PC-9 (cell line): ENCODE measurements at regions of chr7 and their contacts with region 1.

Region 1: DNA sequence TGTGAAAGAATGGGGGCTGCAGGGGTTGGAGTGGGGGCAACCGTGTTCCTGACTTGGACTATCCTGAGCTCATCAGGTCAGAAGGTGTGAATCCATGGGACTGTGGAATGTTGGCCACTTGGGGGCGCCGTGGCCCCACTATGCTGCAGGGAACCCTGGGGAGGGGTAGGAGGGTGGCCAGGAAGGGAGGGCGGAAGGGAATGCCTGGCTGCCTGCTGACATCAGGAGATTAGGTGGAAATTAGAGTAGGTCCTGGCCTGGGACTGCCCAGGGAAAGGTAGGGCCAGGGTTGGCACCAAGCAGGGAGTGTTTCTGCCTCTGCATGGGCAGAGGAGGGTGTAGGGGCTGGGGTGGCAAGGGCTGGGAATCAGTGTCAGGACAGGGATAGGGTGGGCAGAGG is 65.8 kb upstream of the PRSS58 start:
- DNase-seq: peak; percentile 66 to 85
- H3K4me3 ChIP-seq: no peak overlapping the region
- H3K27ac ChIP-seq: no peak overlapping the region
- H3K4me1 ChIP-seq: peaks cover 13% of the 10 kb centered on the region
- H3K27me3 ChIP-seq: no peaks in the 10 kb centered on the region
- CTCF ChIP-seq: peak; percentile 88

Region 2: DNA sequence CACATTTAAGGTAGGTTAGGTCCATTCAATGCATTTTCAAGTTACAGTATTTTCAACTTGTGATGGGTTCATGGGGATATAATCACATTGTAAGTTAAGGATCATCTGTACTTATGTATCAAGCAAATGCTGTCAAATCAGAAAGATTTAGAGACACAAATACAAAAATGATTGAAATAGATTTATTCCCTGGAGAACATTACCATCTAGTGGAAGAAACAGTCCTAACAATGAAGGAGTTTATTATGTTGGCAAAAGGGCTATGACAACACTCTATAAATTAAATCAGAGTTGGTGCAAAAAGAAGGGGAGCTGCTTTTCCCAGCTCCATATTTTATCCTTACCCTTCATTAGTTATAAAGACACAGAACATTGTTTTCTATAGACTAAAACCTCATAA is 134.9 kb before region 1 on chr7:
- CTCF ChIA-PET with region 1: interaction called, 11 read pairs
- POLR2A ChIA-PET with region 1: no interaction called
- intact Hi-C with region 1: no loop called
- DNase-seq: peak in 1 of 2 experiments; percentile 55
- H3K4me3 ChIP-seq: no peak overlapping the region
- H3K27ac ChIP-seq: no peak overlapping the region
- H3K4me1 ChIP-seq: 0 out of 2 replicates have a peak, but pooled peaks cover 8% of the 10 kb centered on the region
- H3K27me3 ChIP-seq: no peaks in the 10 kb centered on the region
- CTCF ChIP-seq: peak; percentile 74

Region 3: GRCh38 chr7:142391191-142391992 is 67.7 kb after region 1 on chr7:
- CTCF ChIA-PET with region 1: no interaction called
- POLR2A ChIA-PET with region 1: no interaction called
- intact Hi-C with region 1: no loop called
- DNase-seq: peak in 1 of 2 experiments; percentile 52
- H3K4me3 ChIP-seq: no peak overlapping the region
- H3K27ac ChIP-seq: no peak overlapping the region
- H3K4me1 ChIP-seq: 0 out of 2 replicates have a peak, but pooled peaks cover 4% of the 10 kb centered on the region
- H3K27me3 ChIP-seq: no peaks in the 10 kb centered on the region
- CTCF ChIP-seq: peak; percentile 58

Region 4: GRCh38 chr7:142485617-142486226 is 162.0 kb after region 1 on chr7:
- CTCF ChIA-PET with region 1: interaction called, 12 read pairs
- POLR2A ChIA-PET with region 1: no interaction called
- intact Hi-C with region 1: no loop called
- DNase-seq: no peak
- H3K4me3 ChIP-seq: no peak overlapping the region
- H3K27ac ChIP-seq: no peak overlapping the region
- H3K4me1 ChIP-seq: no peaks in the 10 kb centered on the region; the same call in 1 of the 2 replicates
- H3K27me3 ChIP-seq: no peaks in the 10 kb centered on the region
- CTCF ChIP-seq: 0 out of 2 replicates have a peak, but pooled peaks have one; percentile 32

Region 5: DNA sequence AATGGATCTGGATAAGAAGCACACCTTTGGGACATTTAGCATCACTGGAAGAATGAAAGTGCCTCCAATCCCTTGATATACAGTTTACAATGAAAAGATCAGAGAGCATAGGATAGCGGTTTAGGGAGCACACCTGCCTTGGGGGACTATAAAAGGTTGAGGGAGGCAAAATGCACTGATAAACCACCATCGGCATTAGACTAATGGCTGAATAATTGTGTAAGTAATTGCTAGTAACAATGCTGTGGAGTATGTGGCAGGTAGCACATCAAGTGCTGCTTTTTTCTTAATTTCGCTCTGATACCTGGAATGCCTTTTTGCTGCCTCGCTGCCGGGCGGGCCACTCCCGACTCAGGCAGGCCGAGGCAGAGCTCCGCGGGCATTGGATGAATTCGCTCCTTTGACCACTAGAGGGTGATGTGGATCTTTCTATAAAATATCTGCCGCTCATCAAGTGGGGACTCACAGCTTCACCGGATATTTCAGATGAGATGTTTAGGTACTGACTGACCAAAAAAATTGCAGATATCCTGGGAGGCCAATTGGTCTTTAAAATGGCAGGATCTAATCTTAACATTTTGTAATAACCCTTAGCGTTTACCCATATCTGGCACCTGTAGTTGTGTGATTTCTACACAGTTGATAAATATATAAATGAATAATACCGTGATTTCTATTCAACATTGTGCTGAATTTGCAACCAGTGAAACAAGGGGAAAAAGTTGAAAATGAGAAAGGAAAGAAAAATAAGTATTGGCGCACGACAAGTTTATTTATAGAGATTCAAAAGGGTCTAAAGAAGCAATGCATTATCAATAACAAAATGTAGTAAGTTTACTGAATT is 308.8 kb after region 1 on chr7:
- CTCF ChIA-PET with region 1: no interaction called
- POLR2A ChIA-PET with region 1: no interaction called
- intact Hi-C with region 1: loop called (anchors 1 kb)
- DNase-seq: peak; percentile 70 to 72
- H3K4me3 ChIP-seq: no peak overlapping the region
- H3K27ac ChIP-seq: no peak overlapping the region
- H3K4me1 ChIP-seq: no peaks in the 10 kb centered on the region
- H3K27me3 ChIP-seq: no peaks in the 10 kb centered on the region
- CTCF ChIP-seq: peak; percentile 93

Region 6: GRCh38 chr7:142960955-142961512 is 637.3 kb after region 1 on chr7:
- CTCF ChIA-PET with region 1: no interaction called
- POLR2A ChIA-PET with region 1: no interaction called
- intact Hi-C with region 1: loop called (anchors 5 kb)
- DNase-seq: no peak
- H3K4me3 ChIP-seq: no peak overlapping the region
- H3K27ac ChIP-seq: no peak overlapping the region
- H3K4me1 ChIP-seq: peaks cover 26% of the 10 kb centered on the region
- H3K27me3 ChIP-seq: no peaks in the 10 kb centered on the region
- CTCF ChIP-seq: peak; percentile 60

Region 7: GRCh38 chr7:143063741-143064140 is 740.0 kb after region 1 on chr7:
- CTCF ChIA-PET with region 1: no interaction called
- POLR2A ChIA-PET with region 1: no interaction called
- intact Hi-C with region 1: no loop called
- DNase-seq: no peak
- H3K4me3 ChIP-seq: no peak overlapping the region
- H3K27ac ChIP-seq: no peak overlapping the region
- H3K4me1 ChIP-seq: no peaks in the 10 kb centered on the region
- H3K27me3 ChIP-seq: no peaks in the 10 kb centered on the region
- CTCF ChIP-seq: no peak